Esophagus muscularis mucosa (tissue), 4 donors: ENCODE measurements at regions of chr2 and their contacts with region 1.

Region 1: DNA sequence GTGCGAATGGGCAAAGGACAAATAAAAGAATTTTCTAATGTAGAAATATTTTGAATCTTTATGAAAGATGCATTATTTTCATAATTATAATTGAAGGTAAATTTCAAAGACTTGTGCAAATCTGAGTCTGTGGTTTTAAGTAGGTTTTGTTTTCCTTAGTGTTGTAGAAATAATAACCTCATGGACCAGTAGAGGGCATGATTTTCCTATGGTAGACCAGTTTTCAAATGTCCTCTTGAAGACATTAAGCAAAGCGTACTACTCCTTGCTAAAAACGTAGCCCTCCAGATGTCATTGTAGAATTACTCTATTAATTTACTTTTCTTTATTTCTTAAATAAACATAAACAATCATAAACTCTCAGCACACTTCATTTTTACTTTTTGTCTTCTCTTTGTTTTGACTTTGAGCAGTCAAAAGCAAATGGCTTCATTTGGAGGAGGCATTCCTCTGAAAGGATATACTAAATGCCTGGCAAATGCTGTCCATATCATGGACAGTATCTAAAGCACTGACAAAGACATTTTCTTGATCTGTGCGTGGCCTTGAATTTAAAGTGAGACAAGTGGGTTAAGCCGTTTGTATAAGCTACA is 85.8 kb upstream of the FAM237A start:
- DNase-seq: no peak
- H3K4me3 ChIP-seq: no peak overlapping the region
- H3K27ac ChIP-seq: no peak overlapping the region
- H3K4me1 ChIP-seq: peaks cover 0 to 21% (median 4%) of the 10 kb centered on the region in 4 donors
- H3K27me3 ChIP-seq: no peaks in the 10 kb centered on the region
- CTCF ChIP-seq: peak in 1 of 3 experiments; percentile 50
- EP300 ChIP-seq: no peak
- POLR2A ChIP-seq: no peak

Region 2: GRCh38 chr2:206392118-206392517 is 164.3 kb before region 1 on chr2:
- intact Hi-C with region 1: loop called (anchors 5 kb)
- DNase-seq: no peak
- H3K4me3 ChIP-seq: no peak overlapping the region
- H3K27ac ChIP-seq: no peak overlapping the region
- H3K4me1 ChIP-seq: no peaks in the 10 kb centered on the region
- H3K27me3 ChIP-seq: no peaks in the 10 kb centered on the region
- CTCF ChIP-seq: peak; percentile 35 to 49 (median 40)
- EP300 ChIP-seq: no peak
- POLR2A ChIP-seq: no peak

Region 3: GRCh38 chr2:206713746-206714145 is 157.3 kb after region 1 on chr2:
- intact Hi-C with region 1: no loop called
- DNase-seq: no peak
- H3K4me3 ChIP-seq: no peak overlapping the region
- H3K27ac ChIP-seq: no peak overlapping the region
- H3K4me1 ChIP-seq: no peaks in the 10 kb centered on the region
- H3K27me3 ChIP-seq: peaks cover 0 to 9% (median 0%) of the 10 kb centered on the region in 4 donors
- CTCF ChIP-seq: no peak
- EP300 ChIP-seq: no peak
- POLR2A ChIP-seq: no peak